ENCODE measurements at regions of chr1 and their contacts with region 1.

Region 1: GRCh38 chr1:2174348-2175054 is 20.1 kb downstream of the FAAP20 start:
- DNase-seq: no peak

Region 2: DNA sequence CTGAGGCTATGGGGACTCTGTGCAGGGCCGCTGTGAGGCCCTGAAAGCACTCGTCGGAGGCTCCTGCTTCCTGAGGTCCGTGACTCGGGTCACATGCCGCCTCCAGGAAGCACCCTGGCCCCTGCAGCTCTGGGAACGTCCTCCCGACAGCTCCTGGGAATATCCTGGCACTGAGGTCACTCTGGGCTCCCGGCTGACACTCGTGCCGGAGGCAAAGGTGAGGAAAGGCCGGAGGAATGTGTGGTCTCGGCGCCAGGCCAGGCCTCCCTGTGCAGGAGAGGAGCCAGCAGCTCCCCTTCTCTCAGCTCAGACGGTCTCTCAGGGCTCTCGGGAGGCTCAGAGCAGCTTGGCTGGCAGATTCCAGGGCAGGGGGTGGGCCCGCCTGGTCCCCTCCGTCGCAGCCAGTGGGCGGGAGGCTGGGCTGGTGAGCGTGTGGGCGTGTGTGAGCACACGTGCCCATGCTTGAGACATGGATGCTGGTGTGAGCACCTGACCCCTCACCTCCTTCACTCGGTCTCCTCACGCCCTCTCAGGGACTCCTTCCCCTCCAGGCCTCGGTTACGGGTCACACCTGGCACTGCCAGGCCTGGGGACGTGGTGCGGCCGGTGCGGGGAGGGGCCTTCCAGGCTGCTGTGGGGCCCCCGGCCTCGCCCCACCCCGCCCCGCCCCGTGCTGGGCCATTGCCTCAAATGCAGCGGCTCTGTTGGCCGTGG is 1094.9 kb before region 1 on chr1:
- intact Hi-C with region 1: loop called in 1 of 2 experiments (anchors 5 kb)
- DNase-seq: peak; percentile 85

Region 3: GRCh38 chr1:1959840-1960479 is 214.5 kb before region 1 on chr1:
- intact Hi-C with region 1: loop called in 1 of 2 experiments (anchors 10 kb)
- DNase-seq: peak; percentile 91

Region 4: DNA sequence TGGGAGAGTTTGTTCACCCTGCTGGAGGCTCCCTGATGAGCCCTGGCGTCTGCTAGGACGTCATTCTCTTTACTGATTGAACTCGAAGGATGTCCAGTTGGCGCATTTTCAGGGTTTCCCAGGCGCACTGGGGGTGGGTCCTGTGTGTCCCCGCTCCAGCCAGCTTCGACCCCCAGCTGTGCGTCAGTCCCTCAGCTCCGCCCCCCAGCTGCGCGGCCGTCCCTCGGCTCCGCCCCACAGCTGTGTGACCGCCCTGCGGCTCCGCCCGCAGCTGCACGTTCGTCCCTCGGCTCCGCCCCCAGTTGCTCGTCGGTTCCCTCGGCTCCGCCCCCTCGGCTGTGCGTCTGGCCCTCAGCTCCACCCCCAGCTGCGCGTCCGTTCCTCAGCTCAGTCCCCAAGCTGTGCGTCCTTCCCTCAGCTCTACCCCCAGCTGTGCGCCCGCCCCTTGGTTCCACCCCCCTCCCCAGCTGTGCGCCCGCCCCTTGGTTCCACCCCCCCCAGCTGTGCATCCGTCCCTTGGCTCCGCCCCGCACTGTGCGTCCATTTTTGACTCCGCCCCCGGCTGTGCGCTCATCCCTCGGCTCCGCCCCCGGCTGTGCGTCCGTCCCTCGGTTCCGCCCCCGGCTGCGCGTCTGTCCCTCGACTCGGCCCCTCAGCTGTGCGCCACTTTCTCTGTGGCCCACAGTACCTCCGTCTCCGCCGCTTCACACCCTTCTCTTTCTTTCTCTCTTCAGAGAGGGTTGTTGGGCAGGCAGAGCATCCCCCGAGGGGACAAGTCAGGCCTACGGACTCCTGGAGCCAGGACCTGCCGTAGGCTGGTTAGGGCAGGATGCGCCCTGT is 41.2 kb before region 1 on chr1:
- intact Hi-C with region 1: loop called in 1 of 2 experiments (anchors 5 kb)
- DNase-seq: peak; percentile 100

Region 5: DNA sequence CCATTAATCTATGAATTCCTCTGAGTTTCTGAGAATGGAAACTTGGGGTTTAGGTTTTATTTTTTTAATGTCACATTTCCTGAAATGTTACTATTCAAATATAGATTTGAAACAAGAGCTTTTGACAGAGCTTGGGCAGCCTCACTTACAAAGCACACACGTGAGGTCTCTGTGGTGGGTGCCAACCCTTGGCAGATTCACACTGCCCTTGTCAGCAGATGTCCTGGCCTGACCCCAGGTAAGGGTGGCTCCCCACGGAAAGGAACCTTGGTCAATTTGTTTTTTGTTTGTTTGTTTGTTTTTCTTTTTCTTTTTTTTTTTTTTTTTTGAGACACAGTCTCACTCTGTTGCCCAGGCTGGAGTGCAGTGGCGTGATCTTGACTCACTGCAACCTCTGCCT is 33.5 kb before region 1 on chr1:
- intact Hi-C with region 1: loop called in 1 of 2 experiments (anchors 1 kb)
- DNase-seq: peak; percentile 14